ENCODE measurements at regions of chr11 and their contacts with region 1.

Region 1: DNA sequence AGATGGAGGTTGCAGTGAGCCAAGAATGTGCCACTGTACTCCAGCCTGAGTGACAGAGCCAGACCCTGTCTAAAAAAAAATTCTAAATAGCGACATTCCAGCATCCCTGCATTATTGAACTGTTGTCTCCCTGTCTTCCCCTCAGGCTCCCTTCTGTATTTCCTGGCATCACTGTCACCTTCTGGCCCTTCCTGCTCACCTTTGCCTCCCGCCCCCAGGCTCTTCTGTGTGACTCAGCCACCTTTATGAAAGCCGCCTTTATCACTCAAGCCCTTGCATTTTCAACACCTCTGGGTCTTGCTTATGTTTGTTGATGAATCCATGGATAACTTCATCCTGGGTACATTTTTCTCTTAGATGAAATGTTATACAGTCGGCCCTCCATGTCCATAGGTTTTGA is 21.1 kb downstream of the UBASH3B start:
- DNase-seq: no peak
- ATAC-seq: no peak
- H3K4me3 ChIP-seq: no peak overlapping the region
- H3K4me3 Mint-ChIP-seq: peak overlapping the region; percentile 29
- H3K27ac ChIP-seq: no peak overlapping the region
- H3K27ac Mint-ChIP-seq: peak overlapping the region; percentile 58 to 77
- H3K4me1 ChIP-seq: peaks cover 36% of the 10 kb centered on the region
- H3K4me1 Mint-ChIP-seq: peaks cover 19 to 40% of the 10 kb centered on the region in 2 donors
- H3K27me3 ChIP-seq: no peaks in the 10 kb centered on the region
- H3K27me3 Mint-ChIP-seq: no peaks in the 10 kb centered on the region
- CTCF ChIP-seq: no peak

Region 2: DNA sequence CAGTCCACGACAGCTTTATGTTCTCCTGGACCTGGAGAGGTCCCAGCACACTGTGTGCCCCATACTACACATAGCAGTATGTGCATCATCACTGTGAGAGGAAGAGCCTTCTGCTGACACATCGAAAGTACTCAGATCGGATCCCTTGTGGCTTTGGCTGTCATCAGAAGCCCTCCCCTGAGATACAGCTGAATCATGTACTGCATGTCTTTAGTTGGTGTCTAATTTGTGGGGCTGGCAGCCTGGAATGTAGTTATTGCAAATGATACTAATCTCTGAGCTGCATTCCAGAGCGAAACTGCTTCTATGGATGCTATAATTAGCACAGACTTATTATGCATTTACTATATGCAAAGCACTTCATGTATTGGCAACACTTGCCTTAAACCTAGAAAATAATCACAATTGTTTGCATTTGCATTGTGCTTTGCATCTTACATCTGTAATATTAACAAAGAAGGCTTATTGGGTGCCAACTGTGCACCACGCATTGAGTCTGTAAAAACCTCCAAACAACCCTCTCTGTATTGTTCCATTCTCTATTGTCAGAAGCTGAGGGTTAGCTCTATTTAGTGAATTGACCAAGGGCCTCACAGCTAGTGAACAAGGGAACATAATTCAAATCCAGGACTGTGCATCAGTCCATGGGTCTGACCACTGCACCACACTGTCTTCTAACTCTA is 72.5 kb after region 1 on chr11:
- intact Hi-C with region 1: loop called (anchors 5 kb)
- DNase-seq: peak in 1 of 2 donors; percentile 63
- ATAC-seq: peak; percentile 65 to 82 (median 70)
- H3K4me3 ChIP-seq: no peak overlapping the region
- H3K4me3 Mint-ChIP-seq: peak overlapping the region; percentile 22
- H3K27ac ChIP-seq: no peak overlapping the region
- H3K27ac Mint-ChIP-seq: peak overlapping the region in 1 of 2 donors; percentile 71
- H3K4me1 ChIP-seq: peaks cover 59% of the 10 kb centered on the region
- H3K4me1 Mint-ChIP-seq: peaks cover 28 to 31% of the 10 kb centered on the region in 2 donors
- H3K27me3 ChIP-seq: no peaks in the 10 kb centered on the region
- H3K27me3 Mint-ChIP-seq: no peaks in the 10 kb centered on the region
- CTCF ChIP-seq: no peak

Measured in natural killer cell (primary cell).